Right ventricle myocardium inferior (tissue), 1 donor: ENCODE measurements at regions of chr18 and their contacts with region 1.

Region 1: DNA sequence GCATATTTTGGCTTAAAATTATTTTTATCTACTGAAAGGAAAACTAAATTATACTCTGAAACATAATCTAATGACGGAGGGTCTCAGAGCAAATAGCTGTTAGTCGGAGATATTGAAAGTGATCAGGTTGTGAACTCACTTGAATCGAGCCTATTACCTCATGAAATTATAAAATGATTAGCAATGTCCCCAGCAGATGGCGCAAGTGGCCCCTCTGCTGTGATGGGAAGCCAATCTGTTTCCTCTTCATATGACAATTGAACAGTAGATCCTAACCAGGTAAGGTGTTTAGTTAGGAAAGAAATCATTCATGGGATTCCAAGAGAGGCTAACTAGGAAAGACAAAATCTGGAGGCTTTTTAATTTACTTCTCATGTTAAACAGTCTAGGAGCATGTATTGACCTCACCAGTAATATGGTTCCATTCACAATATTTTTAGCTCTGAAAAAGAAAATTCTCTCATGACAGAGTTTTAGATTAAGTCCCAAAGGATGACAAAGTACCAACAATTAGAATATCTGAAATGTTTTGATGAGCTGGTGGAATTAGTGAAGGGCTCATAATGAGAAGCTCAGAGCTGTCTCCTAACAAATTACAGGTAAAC is 29.9 kb upstream of the MPPE1 start:
- DNase-seq: peak; percentile 80
- ATAC-seq: peak; percentile 82

Region 2: GRCh38 chr18:11840493-11840892 is 97.5 kb before region 1 on chr18:
- intact Hi-C with region 1: no loop called
- DNase-seq: no peak
- ATAC-seq: no peak

Region 3: GRCh38 chr18:11955239-11956029 is 17.5 kb after region 1 on chr18:
- intact Hi-C with region 1: no loop called
- DNase-seq: peak; percentile 72
- ATAC-seq: peak; percentile 52

Region 4: DNA sequence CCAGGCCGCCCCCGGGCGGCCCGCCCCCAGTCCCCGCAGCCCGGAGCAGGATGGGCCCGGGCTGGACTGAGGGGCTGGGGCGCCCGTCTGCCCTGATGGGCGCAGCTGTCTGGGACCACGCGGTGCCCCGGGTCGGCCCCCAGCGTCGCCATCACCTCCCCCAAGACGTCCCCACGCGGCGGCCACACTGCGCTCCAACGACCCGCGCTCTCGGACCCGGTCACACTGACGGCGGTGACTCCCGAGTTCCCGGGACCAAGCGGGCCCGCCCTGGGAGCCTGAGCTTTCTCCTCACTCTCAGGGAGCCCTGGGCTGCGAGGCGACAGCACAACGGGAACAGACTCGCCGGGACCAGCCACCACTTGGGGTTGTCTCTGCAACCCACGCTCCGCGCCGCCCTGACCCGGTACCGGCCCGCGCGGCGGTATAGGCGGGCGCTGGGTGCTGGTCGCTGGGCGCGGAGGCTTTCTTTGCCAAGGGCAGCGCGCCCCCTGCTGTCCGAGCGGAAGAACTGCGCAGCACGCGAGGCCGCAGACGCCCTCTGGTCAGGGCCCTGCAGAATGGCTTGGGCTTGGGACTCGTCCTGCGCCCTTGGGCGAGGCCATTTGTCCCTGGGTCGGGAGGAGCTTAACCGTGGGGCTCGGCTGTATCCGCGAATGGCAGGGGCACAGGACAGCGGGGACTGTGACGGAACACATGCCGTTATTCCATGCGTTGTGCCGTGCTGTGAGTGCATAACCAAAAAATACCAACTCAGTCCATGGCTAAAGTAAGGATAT is 100.9 kb after region 1 on chr18:
- intact Hi-C with region 1: loop called (anchors 2 kb)
- DNase-seq: peak; percentile 92
- ATAC-seq: peak; percentile 97